ENCODE measurements at regions of chr1 and their contacts with region 1.

Region 1: DNA sequence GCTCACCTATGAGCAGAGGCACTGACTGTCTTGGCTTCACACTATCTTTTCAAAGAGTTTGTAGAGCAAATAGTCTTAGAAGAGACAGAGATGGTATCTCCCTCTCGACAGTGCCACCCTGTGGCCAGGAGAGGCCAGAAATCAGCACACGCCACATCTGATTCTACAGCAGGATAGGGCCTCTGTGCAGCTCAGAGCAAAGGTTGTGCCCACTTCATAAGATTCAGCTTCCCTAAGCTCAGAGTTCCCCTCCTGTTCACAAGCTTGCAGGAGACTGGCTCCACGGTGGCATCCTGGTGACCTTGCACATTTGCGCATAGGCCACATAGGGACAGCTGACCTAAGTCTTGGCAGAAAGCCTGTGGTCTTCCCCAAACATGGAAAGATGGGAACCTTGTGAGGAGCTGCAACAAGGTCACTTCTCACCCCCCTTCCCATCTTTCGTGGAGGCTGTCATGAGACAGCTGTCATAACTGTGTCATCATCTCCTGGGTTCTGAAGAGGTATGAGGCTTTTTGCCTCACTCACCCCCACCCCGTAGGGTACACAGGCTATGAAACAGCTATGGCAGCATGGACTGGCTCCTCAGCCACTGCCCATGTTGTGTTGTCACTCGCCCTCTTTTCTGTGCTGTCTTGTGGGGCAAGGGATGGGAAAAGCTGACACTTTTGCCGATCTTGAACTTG is 3.0 kb downstream of the ITLN2 start:
- DNase-seq: peak; percentile 62 to 70 (median 65)
- ATAC-seq: peak; percentile 90
- H3K4me3 ChIP-seq: no peak overlapping the region
- H3K27ac ChIP-seq: no peak overlapping the region
- H3K4me1 ChIP-seq: peaks cover 0 to 9% of the 10 kb centered on the region in 2 experiments; a peak in 2 of 5 replicates
- H3K27me3 ChIP-seq: peaks cover 10 to 30% of the 10 kb centered on the region in 2 experiments; a peak in 3 of 5 replicates
- CTCF ChIP-seq: peak; percentile 78 to 85 (median 80)
- EP300 ChIP-seq: no peak
- POLR2A ChIP-seq: no peak
- RAD21 ChIP-seq: peak; percentile 78 to 86

Region 2: GRCh38 chr1:160376525-160377131 is 575.0 kb before region 1 on chr1:
- CTCF ChIA-PET with region 1: no interaction called
- POLR2A ChIA-PET with region 1: no interaction called
- in situ Hi-C with region 1: no loop called
- intact Hi-C with region 1: no loop called
- DNase-seq: peak; percentile 72 to 82 (median 74)
- ATAC-seq: peak; percentile 85
- H3K4me3 ChIP-seq: no peak overlapping the region
- H3K27ac ChIP-seq: no peak overlapping the region
- H3K4me1 ChIP-seq: peaks cover 17 to 22% of the 10 kb centered on the region in 2 experiments
- H3K27me3 ChIP-seq: no peaks in the 10 kb centered on the region; a peak in 1 of 5 replicates
- CTCF ChIP-seq: peak; percentile 89 to 98 (median 94)
- EP300 ChIP-seq: no peak
- POLR2A ChIP-seq: no peak
- RAD21 ChIP-seq: peak; percentile 97 to 99

Region 3: DNA sequence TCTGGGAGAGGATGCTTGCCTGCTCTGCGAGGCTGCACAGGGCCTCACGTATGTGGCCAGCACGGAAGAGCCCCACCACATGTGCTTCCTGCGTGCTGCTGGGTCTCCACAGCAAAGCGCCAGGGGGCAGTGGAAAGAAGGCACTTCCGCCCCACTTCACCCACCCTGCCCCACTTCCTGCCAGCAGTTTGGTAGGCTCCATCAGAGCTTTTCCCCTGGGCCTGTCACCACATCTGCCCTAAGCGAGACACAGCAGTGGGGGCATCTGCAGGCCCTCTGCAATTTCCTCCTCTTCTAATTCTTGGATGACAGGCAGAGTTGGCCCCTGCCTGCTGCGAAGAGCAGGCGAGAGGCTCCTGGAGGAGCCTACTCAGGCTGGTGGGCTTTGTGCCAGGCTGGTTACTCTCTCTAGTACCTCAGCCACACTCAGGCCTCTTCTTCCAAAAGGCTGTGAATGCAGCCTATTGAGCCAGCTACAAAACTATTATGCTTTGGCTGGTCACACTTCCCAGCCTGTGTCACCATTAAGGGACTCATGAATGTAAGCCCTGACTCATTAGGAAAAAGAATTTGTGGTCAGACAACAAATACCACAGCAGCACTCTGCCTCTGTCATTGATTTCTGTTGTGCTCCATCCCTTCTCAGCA is 113.9 kb before region 1 on chr1:
- CTCF ChIA-PET with region 1: interaction called, 18 read pairs
- POLR2A ChIA-PET with region 1: no interaction called
- in situ Hi-C with region 1: loop called (anchors 5 kb)
- intact Hi-C with region 1: loop called (anchors 1 kb)
- DNase-seq: peak in 2 of 4 experiments; percentile 13 to 24
- ATAC-seq: peak; percentile 88
- H3K4me3 ChIP-seq: no peak overlapping the region
- H3K27ac ChIP-seq: no peak overlapping the region
- H3K4me1 ChIP-seq: 0 out of 5 replicates have a peak, but pooled peaks cover 0 to 3% of the 10 kb centered on the region in 2 experiments
- H3K27me3 ChIP-seq: peaks cover 2 to 25% of the 10 kb centered on the region in 2 experiments; a peak in 2 of 5 replicates
- CTCF ChIP-seq: peak; percentile 22 to 34 (median 27); a peak in 3 of 6 replicates
- EP300 ChIP-seq: no peak
- POLR2A ChIP-seq: no peak
- RAD21 ChIP-seq: peak in 1 of 2 experiments; percentile 38; a peak in 2 of 4 replicates

Region 4: GRCh38 chr1:160850541-160850940 is 101.0 kb before region 1 on chr1:
- CTCF ChIA-PET with region 1: no interaction called
- POLR2A ChIA-PET with region 1: no interaction called
- in situ Hi-C with region 1: no loop called
- intact Hi-C with region 1: no loop called
- DNase-seq: no peak
- ATAC-seq: no peak
- H3K4me3 ChIP-seq: no peak overlapping the region
- H3K27ac ChIP-seq: no peak overlapping the region
- H3K4me1 ChIP-seq: no peaks in the 10 kb centered on the region
- H3K27me3 ChIP-seq: peaks cover 0 to 8% of the 10 kb centered on the region in 2 experiments; a peak in 2 of 5 replicates
- CTCF ChIP-seq: no peak
- EP300 ChIP-seq: no peak
- POLR2A ChIP-seq: no peak
- RAD21 ChIP-seq: no peak

Region 5: GRCh38 chr1:160981584-160982411 is 30.2 kb after region 1 on chr1:
- CTCF ChIA-PET with region 1: no interaction called
- POLR2A ChIA-PET with region 1: no interaction called
- in situ Hi-C with region 1: no loop called
- intact Hi-C with region 1: no loop called
- DNase-seq: no peak
- ATAC-seq: peak; percentile 41; the same call in 2 of the 3 replicates
- H3K4me3 ChIP-seq: no peak overlapping the region
- H3K27ac ChIP-seq: no peak overlapping the region
- H3K4me1 ChIP-seq: peaks cover 0 to 6% of the 10 kb centered on the region in 2 experiments; a peak in 2 of 5 replicates
- H3K27me3 ChIP-seq: peaks cover 0 to 14% of the 10 kb centered on the region in 2 experiments; a peak in 2 of 5 replicates
- CTCF ChIP-seq: no peak
- EP300 ChIP-seq: no peak
- POLR2A ChIP-seq: no peak
- RAD21 ChIP-seq: no peak